ENCODE measurements at regions of chr3 and their contacts with region 1.

Region 1: GRCh38 chr3:160941885-160942494 is 163.2 kb downstream of the B3GALNT1 start:
- DNase-seq: peak; percentile 79
- H3K4me3 ChIP-seq: no peak overlapping the region
- H3K27ac ChIP-seq: no peak overlapping the region
- H3K4me1 ChIP-seq: peaks cover 5% of the 10 kb centered on the region
- H3K27me3 ChIP-seq: no peaks in the 10 kb centered on the region
- CTCF ChIP-seq: peak; percentile 81

Region 2: DNA sequence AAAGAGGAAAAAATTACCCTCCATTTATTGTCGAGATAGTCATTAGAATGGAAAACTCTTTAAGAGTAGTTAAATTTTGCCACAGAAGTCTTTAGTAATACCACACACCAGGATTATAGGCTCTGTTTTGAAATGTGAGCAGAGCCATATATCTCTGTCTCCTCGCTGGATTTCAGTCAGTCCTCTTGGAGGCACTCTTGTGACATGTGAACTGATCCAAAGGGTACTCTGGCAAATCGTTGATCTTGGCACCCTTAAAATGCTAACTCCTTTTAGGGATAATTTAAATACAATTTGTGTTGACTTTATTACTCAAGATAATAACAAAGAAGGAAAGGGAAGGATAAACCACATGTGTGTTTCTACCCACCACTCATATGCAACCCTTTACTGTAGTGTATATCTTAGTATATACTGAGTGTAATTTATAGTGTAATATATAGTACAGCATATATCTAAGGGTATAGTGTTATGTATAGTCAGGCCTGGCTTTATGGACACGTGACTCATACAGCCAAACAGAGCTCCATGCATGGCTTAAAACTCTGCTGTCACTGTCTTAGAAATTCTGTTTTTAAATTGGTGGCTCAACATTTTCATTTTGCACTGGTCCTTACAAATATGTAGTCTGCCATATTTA is 364.3 kb before region 1 on chr3:
- CTCF ChIA-PET with region 1: no interaction called
- POLR2A ChIA-PET with region 1: no interaction called
- intact Hi-C with region 1: loop called (anchors 5 kb)
- DNase-seq: peak; percentile 39
- H3K4me3 ChIP-seq: no peak overlapping the region
- H3K27ac ChIP-seq: no peak overlapping the region
- H3K4me1 ChIP-seq: no peaks in the 10 kb centered on the region
- H3K27me3 ChIP-seq: no peaks in the 10 kb centered on the region
- CTCF ChIP-seq: peak; percentile 52

Region 3: DNA sequence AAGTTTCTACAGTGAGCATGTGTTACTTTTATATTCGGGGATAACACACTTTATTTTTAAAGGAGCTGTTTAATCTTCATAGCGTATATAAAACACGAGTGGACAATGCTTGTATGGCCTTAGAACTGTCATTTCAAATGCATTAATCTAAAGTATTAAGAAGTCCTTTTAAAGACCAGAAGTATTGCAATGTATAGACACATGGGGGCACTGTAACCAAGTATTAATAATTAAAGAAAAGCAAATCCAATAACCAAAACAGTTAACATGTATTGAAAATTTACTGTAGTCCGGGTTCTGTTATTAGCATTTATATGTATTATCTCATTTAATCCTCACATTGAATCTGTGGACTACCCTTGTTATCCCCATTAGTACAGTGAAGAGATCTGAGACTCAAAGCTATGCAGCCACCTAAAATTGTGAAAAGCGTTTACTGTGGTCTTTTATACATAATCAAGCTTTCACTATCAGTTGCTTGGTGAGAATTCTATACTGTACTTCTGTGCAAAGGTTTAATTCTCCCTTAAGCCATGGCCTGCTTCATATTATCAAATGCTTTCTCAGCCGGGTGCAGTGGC is 254.9 kb before region 1 on chr3:
- CTCF ChIA-PET with region 1: no interaction called
- POLR2A ChIA-PET with region 1: no interaction called
- intact Hi-C with region 1: loop called (anchors 5 kb)
- DNase-seq: peak; percentile 31
- H3K4me3 ChIP-seq: no peak overlapping the region
- H3K27ac ChIP-seq: no peak overlapping the region
- H3K4me1 ChIP-seq: no peaks in the 10 kb centered on the region
- H3K27me3 ChIP-seq: no peaks in the 10 kb centered on the region
- CTCF ChIP-seq: peak; percentile 61

Region 4: DNA sequence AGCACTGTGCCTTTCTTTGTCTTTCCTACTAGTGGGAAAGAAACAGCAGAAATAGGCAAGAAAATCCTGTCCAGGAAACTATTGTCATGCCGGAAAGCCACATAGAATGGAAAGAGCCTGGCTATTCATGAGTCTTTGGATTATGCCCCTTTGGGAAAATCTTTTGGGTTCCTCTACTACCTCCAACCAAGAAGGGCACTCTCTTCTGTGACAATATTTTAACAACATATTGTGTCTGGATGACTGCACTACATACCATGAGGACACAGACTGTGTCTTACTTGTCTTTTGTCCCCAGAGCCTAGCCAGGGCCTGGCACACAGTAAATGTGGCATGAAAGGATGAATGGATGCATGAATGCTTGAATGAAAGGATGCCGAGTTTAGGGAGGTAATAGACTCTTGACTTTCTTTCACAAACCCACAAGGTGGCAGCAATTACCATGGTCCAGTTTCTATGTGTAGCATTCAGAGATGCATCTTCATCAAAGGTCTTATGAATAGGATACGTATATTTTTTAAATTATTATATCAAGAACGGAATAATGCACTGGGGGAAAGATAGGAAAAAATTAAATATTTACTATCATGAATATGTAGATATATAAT is 234.7 kb before region 1 on chr3:
- CTCF ChIA-PET with region 1: interaction called, 4 read pairs
- POLR2A ChIA-PET with region 1: no interaction called
- intact Hi-C with region 1: loop called (anchors 1 kb)
- DNase-seq: peak; percentile 52
- H3K4me3 ChIP-seq: no peak overlapping the region
- H3K27ac ChIP-seq: no peak overlapping the region
- H3K4me1 ChIP-seq: no peaks in the 10 kb centered on the region
- H3K27me3 ChIP-seq: peaks cover 3% of the 10 kb centered on the region
- CTCF ChIP-seq: peak; percentile 58

Region 5: DNA sequence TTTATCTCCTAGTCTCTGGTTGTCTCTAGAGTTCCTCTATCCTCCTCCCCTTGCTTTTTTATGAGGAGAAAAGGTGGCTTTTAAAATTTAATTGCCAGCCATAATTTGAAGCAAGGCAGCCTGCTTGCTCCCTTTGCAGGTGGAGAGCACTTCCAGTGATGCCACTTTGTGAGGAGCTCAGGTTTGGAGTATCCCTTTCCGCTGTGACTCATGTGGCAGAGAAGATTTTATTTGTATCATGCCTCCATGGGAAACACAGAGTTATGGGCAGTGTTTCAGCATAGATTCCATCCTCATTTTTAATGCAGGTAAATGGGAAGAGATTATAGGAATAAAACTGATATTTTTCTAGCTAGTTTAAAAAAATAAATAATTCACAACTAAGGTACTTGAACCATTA is 178.9 kb before region 1 on chr3:
- CTCF ChIA-PET with region 1: no interaction called
- POLR2A ChIA-PET with region 1: no interaction called
- intact Hi-C with region 1: loop called (anchors 5 kb)
- DNase-seq: no peak
- H3K4me3 ChIP-seq: no peak overlapping the region
- H3K27ac ChIP-seq: no peak overlapping the region
- H3K4me1 ChIP-seq: no peaks in the 10 kb centered on the region
- H3K27me3 ChIP-seq: no peaks in the 10 kb centered on the region
- CTCF ChIP-seq: no peak

Measured in A673 (cell line).